ENCODE measurements at regions of chr14 and their contacts with region 1.

Region 1: GRCh38 chr14:22570132-22570949 is 18.7 kb downstream of the DAD1 start:
- DNase-seq: peak; percentile 84
- ATAC-seq: peak; percentile 99
- H3K4me3 Mint-ChIP-seq: no peak overlapping the region
- H3K27ac Mint-ChIP-seq: peak overlapping the region; percentile 99
- H3K4me1 Mint-ChIP-seq: peaks cover 17% of the 10 kb centered on the region
- H3K27me3 Mint-ChIP-seq: no peaks in the 10 kb centered on the region
- CTCF ChIP-seq: peak; percentile 93

Region 2: GRCh38 chr14:22386924-22387775 is 183.2 kb before region 1 on chr14:
- CTCF ChIA-PET with region 1: interaction called, 19 read pairs
- POLR2A ChIA-PET with region 1: no interaction called
- DNase-seq: peak; percentile 72
- ATAC-seq: peak; percentile 58
- H3K4me3 Mint-ChIP-seq: no peak overlapping the region
- H3K27ac Mint-ChIP-seq: no peak overlapping the region
- H3K4me1 Mint-ChIP-seq: peaks cover 4% of the 10 kb centered on the region
- H3K27me3 Mint-ChIP-seq: no peaks in the 10 kb centered on the region; the same call in 1 of the 2 replicates
- CTCF ChIP-seq: peak; percentile 79

Region 3: DNA sequence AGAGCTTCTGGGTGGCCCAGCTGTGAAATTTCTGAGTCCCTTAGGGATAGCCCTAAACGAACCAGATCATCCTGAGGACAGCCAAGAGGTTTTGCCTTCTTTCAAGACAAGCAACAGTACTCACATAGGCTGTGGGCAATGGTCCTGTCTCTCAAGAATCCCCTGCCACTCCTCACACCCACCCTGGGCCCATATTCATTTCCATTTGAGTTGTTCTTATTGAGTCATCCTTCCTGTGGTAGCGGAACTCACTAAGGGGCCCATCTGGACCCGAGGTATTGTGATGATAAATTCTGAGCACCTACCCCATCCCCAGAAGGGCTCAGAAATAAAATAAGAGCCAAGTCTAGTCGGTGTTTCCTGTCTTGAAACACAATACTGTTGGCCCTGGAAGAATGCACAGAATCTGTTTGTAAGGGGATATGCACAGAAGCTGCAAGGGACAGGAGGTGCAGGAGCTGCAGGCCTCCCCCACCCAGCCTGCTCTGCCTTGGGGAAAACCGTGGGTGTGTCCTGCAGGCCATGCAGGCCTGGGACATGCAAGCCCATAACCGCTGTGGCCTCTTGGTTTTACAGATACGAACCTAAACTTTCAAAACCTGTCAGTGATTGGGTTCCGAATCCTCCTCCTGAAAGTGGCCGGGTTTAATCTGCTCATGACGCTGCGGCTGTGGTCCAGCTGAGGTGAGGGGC is 20.2 kb before region 1 on chr14:
- CTCF ChIA-PET with region 1: interaction called, 38 read pairs
- POLR2A ChIA-PET with region 1: no interaction called
- DNase-seq: no peak
- ATAC-seq: no peak; the same call in 1 of the 2 replicates
- H3K4me3 Mint-ChIP-seq: no peak overlapping the region
- H3K27ac Mint-ChIP-seq: peak overlapping the region; percentile 50; the same call in 1 of the 2 replicates
- H3K4me1 Mint-ChIP-seq: peaks cover 57% of the 10 kb centered on the region
- H3K27me3 Mint-ChIP-seq: no peaks in the 10 kb centered on the region
- CTCF ChIP-seq: no peak

Region 4: GRCh38 chr14:22598099-22598899 is 28.0 kb after region 1 on chr14 and contains the start of gene ABHD4:
- CTCF ChIA-PET with region 1: interaction called, 117 read pairs
- POLR2A ChIA-PET with region 1: interaction called, 4 read pairs
- DNase-seq: peak; percentile 83
- ATAC-seq: peak; percentile 86
- H3K4me3 Mint-ChIP-seq: peak within 1 kb of the TSS; percentile 99
- H3K27ac Mint-ChIP-seq: peak within 1 kb of the TSS; percentile 99
- H3K4me1 Mint-ChIP-seq: peaks cover 28% of the 10 kb centered on the region
- H3K27me3 Mint-ChIP-seq: no peaks in the 10 kb centered on the region
- CTCF ChIP-seq: no peak
- total RNA-seq, gene ABHD4: 33.5 to 36.1 TPM (median 33.9 TPM) in 3 replicates

Region 5: GRCh38 chr14:22685467-22685866 is 115.1 kb after region 1 on chr14:
- CTCF ChIA-PET with region 1: interaction called, 10 read pairs
- POLR2A ChIA-PET with region 1: no interaction called
- DNase-seq: no peak
- ATAC-seq: no peak
- H3K4me3 Mint-ChIP-seq: no peak overlapping the region
- H3K27ac Mint-ChIP-seq: no peak overlapping the region
- H3K4me1 Mint-ChIP-seq: peaks cover 6% of the 10 kb centered on the region
- H3K27me3 Mint-ChIP-seq: peaks cover 40% of the 10 kb centered on the region
- CTCF ChIP-seq: no peak

Region 6: DNA sequence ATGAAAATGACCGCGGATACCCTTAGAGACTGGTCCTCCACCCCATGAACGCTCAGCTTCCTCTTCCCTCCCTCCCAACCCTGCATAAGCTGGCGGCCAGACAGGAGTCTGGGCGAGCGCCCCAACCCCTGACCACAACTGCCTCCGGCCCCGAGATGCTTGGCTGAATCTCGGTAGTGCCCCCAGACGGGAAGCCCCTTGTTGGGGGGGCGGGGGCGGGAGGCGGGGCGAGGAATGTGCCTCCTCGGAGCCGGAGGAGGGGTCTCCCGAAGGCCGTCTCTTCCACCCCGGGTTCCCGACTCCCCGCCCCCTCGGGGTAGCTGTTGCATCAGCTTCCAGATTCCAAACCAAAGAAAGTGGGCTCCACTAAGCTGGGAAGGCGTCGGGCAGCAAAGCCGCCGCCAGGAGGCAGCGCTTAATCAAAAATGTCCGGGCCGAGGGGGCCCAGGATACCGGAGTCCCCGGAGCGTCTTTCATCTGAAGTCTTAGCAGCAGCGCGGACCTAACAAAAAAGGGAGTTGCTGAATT is 252.3 kb after region 1 on chr14:
- CTCF ChIA-PET with region 1: interaction called, 35 read pairs
- POLR2A ChIA-PET with region 1: no interaction called
- DNase-seq: peak; percentile 97
- ATAC-seq: peak; percentile 79
- H3K4me3 Mint-ChIP-seq: peak overlapping the region; percentile 77
- H3K27ac Mint-ChIP-seq: peak overlapping the region; percentile 78
- H3K4me1 Mint-ChIP-seq: peaks cover 57% of the 10 kb centered on the region
- H3K27me3 Mint-ChIP-seq: peaks cover 6% of the 10 kb centered on the region
- CTCF ChIP-seq: peak; percentile 67

Region 7: GRCh38 chr14:22872033-22872832 is 301.9 kb after region 1 on chr14:
- CTCF ChIA-PET with region 1: interaction called, 12 read pairs
- POLR2A ChIA-PET with region 1: no interaction called
- DNase-seq: peak; percentile 94
- ATAC-seq: peak; percentile 67
- H3K4me3 Mint-ChIP-seq: peak overlapping the region; percentile 83
- H3K27ac Mint-ChIP-seq: peak overlapping the region; percentile 36
- H3K4me1 Mint-ChIP-seq: peaks cover 18% of the 10 kb centered on the region
- H3K27me3 Mint-ChIP-seq: no peaks in the 10 kb centered on the region
- CTCF ChIP-seq: peak; percentile 90

Measured in WTC11 (cell line).